Aorta (tissue), 5 donors: ENCODE measurements at regions of chr17 and their contacts with region 1.

Region 1: DNA sequence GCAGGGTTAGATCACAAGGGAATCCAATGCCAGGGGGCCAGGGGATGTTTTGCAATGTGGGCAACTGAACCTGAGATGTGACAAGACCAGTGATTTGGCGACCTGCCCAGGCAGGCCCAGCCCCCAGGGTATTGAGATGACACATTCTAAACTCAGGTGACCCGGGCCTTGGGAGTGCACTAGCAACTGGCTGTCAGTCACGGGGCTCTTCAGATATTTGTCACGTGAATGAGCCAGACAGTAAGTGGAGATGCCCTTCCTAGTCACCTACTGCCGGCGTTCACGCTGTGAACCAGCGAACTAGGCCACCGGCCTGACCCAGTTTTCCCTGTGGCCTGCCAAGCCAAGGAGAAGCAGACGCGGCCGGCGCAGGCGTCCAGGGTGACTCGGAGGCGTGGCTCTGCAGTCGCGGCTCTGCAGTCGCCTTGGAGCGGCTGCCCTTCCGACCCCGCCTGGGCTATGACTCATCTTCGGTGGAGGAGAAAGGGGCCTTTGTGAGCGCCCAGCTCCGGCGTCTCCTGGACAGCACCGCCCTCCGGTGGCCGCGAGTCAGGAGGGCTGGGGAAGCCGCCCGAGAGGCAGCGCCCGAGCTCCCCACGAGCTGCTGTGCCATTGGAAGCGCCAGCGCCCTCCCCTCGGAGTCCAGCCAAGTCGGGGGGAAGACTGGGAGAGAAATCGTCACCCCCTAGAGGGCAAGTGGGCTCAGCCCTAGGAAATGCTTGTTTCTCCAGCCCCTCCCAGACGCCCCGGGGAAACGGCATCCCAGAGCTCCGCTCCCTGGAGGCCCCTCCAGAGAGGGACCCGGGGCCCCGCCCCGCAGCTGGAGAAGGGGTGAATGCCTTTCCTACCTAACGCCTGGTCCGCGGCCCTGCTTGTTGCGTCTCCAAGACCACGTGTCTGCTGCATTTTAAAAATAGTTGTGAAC is 38.8 kb downstream of the WSB1 start:
- DNase-seq: peak; percentile 100
- ATAC-seq: peak; percentile 99
- H3K4me3 ChIP-seq: peak overlapping the region; percentile 25 to 30
- H3K27ac ChIP-seq: peak overlapping the region in 1 of 2 donors; percentile 92
- H3K4me1 ChIP-seq: no peaks in the 10 kb centered on the region
- H3K27me3 ChIP-seq: no peaks in the 10 kb centered on the region

Region 2: GRCh38 chr17:27236717-27237315 is 95.9 kb before region 1 on chr17:
- intact Hi-C with region 1: loop called in 1 of 2 experiments (anchors 5 kb)
- DNase-seq: peak; percentile 81 to 82
- ATAC-seq: peak; percentile 76
- H3K4me3 ChIP-seq: no peak overlapping the region
- H3K27ac ChIP-seq: no peak overlapping the region
- H3K4me1 ChIP-seq: no peaks in the 10 kb centered on the region
- H3K27me3 ChIP-seq: no peaks in the 10 kb centered on the region

Region 3: DNA sequence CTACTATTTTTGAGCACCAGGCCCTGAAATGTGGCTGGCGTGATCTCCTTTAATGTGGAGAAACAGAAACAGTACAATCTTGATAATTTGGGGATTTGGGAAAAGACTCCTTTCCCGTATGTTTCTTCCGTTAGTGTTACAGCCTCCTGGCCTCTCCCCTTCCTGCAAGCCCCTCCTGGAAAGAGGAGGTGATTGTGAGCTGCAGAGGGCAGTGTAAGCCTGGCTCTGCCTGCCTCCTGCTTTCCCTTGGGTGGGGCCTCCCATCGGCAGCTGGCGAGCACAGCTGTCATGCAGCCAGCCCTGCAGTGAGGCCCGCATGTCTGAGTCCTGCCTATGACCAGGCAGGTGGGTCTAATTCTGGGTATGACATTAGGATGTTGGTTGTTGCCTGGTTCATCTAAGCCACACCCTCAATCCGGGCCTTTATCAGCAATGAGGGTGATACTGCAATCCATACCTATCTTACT is 87.5 kb before region 1 on chr17:
- intact Hi-C with region 1: loop called in 1 of 2 experiments (anchors 2 kb)
- DNase-seq: peak; percentile 93 to 94
- ATAC-seq: peak; percentile 95
- H3K4me3 ChIP-seq: no peak overlapping the region
- H3K27ac ChIP-seq: peak overlapping the region; percentile 30 to 63
- H3K4me1 ChIP-seq: no peaks in the 10 kb centered on the region
- H3K27me3 ChIP-seq: no peaks in the 10 kb centered on the region

Region 4: DNA sequence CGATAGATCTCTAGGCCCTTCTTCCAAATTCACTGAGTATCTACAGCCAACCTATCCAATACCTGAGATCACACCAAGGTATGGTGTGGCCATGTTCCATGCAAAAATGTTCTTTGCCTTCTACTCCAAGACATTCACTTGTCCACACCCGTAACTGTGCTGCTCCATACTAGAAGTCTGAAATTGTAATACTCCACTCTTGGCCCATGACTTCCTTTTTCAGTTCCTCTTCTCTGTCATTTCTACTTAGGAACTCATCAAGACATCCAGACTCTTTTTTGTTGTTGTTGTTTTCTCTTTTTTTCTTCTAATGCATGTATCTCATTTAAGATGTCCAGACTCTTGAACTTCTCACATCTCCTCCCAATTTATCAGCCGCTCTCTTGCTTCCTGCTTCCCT is 81.0 kb after region 1 on chr17:
- intact Hi-C with region 1: no loop called
- DNase-seq: no peak
- ATAC-seq: no peak
- H3K4me3 ChIP-seq: no peak overlapping the region
- H3K27ac ChIP-seq: no peak overlapping the region
- H3K4me1 ChIP-seq: no peaks in the 10 kb centered on the region
- H3K27me3 ChIP-seq: no peaks in the 10 kb centered on the region